ENCODE measurements at regions of chr1 and their contacts with region 1.

Region 1: GRCh38 chr1:224329842-224330753 is at the start of gene NVL:
- DNase-seq: peak; percentile 71 to 88 (median 84)
- H3K4me3 ChIP-seq: peak within 1 kb of the TSS; percentile 59 to 99 (median 92)
- H3K27ac ChIP-seq: peak within 1 kb of the TSS; percentile 74 to 99 (median 93)
- H3K27me3 ChIP-seq: no peaks in the 10 kb centered on the region
- CTCF ChIP-seq: peak in 35 of 56 donors; percentile 4 to 49 (median 28)
- total RNA-seq, gene NVL: 15.8 to 41.9 (median 24.8) TPM

Region 2: GRCh38 chr1:223712194-223712849 is 617.8 kb before region 1 on chr1 and contains the start of gene CAPN2:
- intact Hi-C with region 1: loop called in 1 of 2 experiments (anchors 10 kb)
- DNase-seq: peak; percentile 42 to 87 (median 66)
- H3K4me3 ChIP-seq: peak within 1 kb of the TSS; percentile 66 to 92 (median 80)
- H3K27ac ChIP-seq: peak within 1 kb of the TSS in 58 of 59 donors; percentile 73 to 96 (median 91)
- H3K27me3 ChIP-seq: no peaks in the 10 kb centered on the region
- CTCF ChIP-seq: peak; percentile 25 to 87 (median 69)
- total RNA-seq, gene CAPN2: 66.7 to 318 (median 103) TPM

Region 3: DNA sequence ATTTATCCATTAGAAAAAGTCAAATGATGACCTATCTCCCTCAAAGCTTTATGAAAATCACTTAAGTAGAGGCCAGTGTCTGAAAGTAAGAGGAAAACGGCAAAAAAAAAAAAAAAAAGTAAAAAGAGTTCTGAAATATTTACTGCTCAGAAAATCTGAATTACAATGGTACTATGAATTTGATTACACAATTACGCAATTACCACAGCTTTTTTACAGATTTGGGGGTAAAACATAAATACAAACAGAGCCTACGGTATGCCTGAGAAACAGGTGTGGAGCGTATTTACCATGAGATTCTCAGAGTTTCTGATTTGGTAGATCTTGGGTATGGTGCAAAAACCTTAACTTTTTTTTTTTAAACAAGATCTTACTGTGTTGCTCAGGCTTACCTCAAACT is 232.1 kb before region 1 on chr1:
- intact Hi-C with region 1: no loop called
- DNase-seq: no peak
- H3K4me3 ChIP-seq: no peak overlapping the region
- H3K27ac ChIP-seq: no peak overlapping the region
- H3K27me3 ChIP-seq: no peaks in the 10 kb centered on the region
- CTCF ChIP-seq: no peak

Region 4: GRCh38 chr1:224113918-224114786 is 215.9 kb before region 1 on chr1 and contains the start of gene FBXO28:
- intact Hi-C with region 1: loop called (anchors 1 to 2 kb)
- DNase-seq: peak; percentile 87 to 99 (median 95)
- H3K4me3 ChIP-seq: peak within 1 kb of the TSS; percentile 69 to 99 (median 92)
- H3K27ac ChIP-seq: peak within 1 kb of the TSS; percentile 76 to 99 (median 95)
- H3K27me3 ChIP-seq: no peaks in the 10 kb centered on the region
- CTCF ChIP-seq: peak in 27 of 56 donors; percentile 2 to 50 (median 33)
- total RNA-seq, gene FBXO28: 21.1 to 49.6 (median 37.7) TPM

Region 5: DNA sequence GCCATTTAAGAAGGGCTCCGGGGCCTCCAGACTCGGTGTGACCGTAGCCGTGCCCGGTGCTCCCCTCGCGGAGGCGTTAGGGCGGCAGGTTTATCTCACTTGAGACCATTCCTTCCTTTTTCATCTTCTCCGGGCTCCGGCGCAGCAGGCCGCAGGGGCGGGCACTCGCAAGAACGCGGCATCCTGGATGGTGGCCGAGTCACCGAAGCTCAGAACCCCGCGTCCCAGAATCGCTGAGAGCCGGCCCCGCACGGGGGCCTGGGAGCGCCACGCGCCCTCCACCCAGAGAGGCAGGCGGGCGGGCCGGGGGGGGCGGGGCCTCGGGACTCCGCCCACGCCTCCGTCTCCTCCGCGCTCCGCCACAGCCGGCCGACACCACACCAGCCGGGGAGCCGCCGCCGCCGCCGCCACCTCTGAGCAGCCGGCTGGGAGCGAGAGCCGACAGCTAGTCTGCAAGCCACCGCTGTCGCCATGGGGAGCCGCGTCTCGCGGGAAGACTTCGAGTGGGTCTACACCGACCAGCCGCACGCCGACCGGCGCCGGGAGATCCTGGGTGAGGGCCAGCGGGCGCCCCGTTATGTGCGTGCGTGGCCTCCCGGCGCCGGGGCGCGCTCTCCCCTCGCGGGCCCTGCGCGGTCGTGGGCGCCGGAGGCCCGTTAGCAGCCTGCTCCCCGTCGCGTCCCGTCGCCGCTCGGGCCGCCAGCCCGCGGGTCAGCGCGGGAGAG is 147.1 kb before region 1 on chr1 and contains the start of gene DEGS1:
- intact Hi-C with region 1: loop called (anchors 2 to 5 kb)
- DNase-seq: peak; percentile 66 to 90 (median 79)
- H3K4me3 ChIP-seq: peak within 1 kb of the TSS; percentile 61 to 99 (median 93)
- H3K27ac ChIP-seq: peak within 1 kb of the TSS; percentile 42 to 98 (median 93)
- H3K27me3 ChIP-seq: no peaks in the 10 kb centered on the region
- CTCF ChIP-seq: peak in 25 of 56 donors; percentile 5 to 44 (median 18)
- total RNA-seq, gene DEGS1: 34.7 to 73.1 (median 54.6) TPM

Region 6: DNA sequence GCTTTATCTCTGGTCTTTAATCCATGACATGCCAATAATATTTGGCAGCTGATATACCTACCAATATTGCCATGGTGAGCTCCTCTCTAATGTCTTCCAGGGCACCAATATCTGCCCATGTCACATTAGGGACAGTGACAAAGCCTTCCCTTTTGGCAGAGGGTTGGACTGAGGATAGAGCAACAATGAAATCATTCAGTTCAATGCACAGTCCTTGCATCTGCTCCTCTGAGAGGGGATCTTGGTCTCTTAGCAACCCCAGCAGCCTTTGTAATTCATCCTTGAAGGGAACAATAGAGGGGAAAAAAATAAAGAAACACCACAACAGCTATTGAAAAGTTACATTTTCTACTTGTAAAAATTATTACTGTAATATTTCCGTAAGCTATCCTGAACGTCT is 42.4 kb before region 1 on chr1:
- intact Hi-C with region 1: loop called in 1 of 2 experiments (anchors 5 kb)
- DNase-seq: peak in 2 of 10 donors; percentile 33 to 47
- H3K4me3 ChIP-seq: peak overlapping the region in 22 of 59 donors; percentile 3 to 50 (median 14)
- H3K27ac ChIP-seq: peak overlapping the region in 57 of 59 donors; percentile 3 to 91 (median 77)
- H3K27me3 ChIP-seq: no peaks in the 10 kb centered on the region
- CTCF ChIP-seq: peak in 3 of 56 donors; percentile 5 to 27 (median 11)

Region 7: DNA sequence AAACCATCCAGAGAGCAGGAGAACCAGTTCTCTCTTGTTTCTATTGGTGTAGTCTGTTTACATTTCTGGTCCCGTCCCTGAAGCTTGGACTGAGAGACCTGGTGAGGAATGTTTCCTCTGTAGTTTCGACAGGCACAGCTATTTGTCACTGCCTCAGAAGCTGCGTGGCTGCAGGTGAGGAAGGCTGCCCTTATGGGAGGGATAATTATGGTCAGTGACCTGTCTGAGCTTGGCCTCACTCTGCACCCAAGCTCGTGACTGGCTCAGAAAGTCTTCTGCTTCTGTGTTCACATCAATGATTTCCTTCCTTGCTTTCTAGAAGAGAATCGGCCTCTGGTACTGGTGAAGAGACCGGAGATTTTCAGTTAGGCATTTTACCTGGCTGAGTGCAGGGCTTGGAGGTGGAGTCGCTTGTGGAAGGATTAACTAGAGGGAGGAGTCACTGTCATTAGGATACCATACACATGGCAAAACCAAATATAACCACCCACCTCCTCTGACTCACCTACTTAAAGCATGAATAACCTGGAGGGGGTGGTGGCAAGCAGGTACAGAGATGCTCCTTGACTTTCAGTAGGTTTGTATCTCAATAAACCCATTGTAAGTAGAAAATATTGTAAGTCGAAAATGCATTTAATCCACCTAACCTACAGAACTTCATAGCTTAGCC is 124.4 kb after region 1 on chr1:
- intact Hi-C with region 1: loop called in 1 of 2 experiments (anchors 5 kb)
- DNase-seq: no peak
- H3K4me3 ChIP-seq: no peak overlapping the region
- H3K27ac ChIP-seq: no peak overlapping the region
- H3K27me3 ChIP-seq: no peaks in the 10 kb centered on the region
- CTCF ChIP-seq: no peak

Measured in dorsolateral prefrontal cortex (tissue), 120 donors.